CD8-positive, alpha-beta memory T cell (primary cell): ENCODE measurements at regions of chr3 and their contacts with region 1.

Region 1: DNA sequence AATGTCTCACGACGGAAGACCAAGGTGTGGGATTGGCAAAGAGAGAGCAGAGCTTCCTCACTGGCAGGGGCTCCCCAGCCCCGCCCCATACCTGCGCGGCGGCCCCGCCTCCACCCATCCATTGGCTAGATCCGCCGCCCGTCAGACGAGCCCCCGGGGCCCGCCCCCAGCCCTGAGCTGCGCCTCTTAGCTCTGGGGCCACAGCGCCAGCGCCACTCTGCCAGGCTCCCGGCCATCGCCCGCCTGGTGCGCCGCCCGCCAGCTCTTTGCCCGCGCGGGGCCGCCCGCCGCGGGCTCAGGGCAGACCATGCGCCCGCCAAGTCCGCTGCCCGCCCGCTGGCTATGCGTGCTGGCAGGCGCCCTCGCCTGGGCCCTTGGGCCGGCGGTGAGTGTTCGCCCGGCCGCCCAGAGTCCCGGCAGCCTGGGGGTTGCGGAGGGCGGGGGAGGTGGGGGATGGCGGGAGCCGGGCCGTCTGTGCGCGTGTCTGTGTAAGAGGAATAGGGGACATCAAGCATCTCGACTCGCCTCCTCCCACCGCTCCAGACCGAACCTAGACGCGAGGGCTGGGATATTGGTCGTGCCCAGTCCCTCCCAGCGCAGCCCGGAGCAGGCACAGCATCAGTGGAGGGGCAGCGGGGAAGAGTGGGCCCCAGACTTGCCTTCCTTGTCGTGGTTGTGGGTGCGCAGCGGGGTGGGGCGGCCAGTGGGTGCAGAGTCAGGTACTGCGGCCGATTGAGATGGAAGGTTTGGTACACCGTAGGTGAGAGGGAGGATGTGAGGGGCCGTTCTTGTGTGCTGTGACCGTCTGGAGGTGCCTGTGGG is at the start of gene VIPR1:
- DNase-seq: peak; percentile 82 to 95 (median 89)
- H3K4me3 ChIP-seq: peak within 1 kb of the TSS; percentile 95
- H3K4me3 Mint-ChIP-seq: peak within 1 kb of the TSS; percentile 88 to 98 (median 93)
- H3K27ac ChIP-seq: peak within 1 kb of the TSS; percentile 38
- H3K27ac Mint-ChIP-seq: peak within 1 kb of the TSS; percentile 70 to 94 (median 88)
- H3K4me1 ChIP-seq: peaks cover 34% of the 10 kb centered on the region
- H3K4me1 Mint-ChIP-seq: peaks cover 32 to 44% (median 32%) of the 10 kb centered on the region in 3 donors
- H3K27me3 ChIP-seq: peaks cover 22% of the 10 kb centered on the region
- H3K27me3 Mint-ChIP-seq: peaks cover 17 to 21% of the 10 kb centered on the region in 2 donors
- total RNA-seq, gene VIPR1: 5.4 to 5.9 TPM

Region 2: DNA sequence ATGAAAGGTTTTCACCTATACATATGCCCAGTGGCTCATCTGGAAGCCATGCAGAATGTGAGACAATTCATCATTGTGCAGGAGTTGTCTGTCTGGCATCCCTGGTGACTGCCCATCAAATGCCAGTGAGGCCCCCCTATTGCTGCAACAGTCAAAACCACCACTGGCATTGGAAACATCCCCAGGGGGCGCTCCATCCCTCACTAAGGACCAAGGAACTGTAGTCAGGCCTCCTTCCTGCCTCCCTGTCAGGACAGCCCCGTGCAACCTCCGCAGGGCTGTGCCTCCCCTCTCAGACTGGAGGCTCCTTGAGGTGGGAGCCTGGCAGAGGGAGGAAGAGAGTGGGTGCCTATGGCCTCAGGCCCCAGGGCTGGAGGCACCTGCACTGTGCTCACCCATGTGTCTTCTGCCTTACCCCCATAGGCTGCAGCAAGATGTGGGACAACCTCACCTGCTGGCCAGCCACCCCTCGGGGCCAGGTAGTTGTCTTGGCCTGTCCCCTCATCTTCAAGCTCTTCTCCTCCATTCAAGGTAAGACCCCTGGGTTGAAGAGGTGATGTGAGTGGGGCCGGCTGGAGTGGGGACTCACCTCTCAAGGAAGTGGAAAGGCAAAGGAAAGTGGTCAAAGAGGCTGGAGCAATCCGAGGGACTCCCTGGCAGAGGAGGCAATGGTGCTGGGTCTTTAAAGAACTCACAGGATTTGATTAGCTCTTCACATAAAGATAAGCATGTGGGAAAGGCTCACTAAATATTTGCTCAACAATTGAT is 16.3 kb after region 1 on chr3:
- CTCF ChIA-PET with region 1: interaction called, 27 read pairs
- POLR2A ChIA-PET with region 1: no interaction called
- DNase-seq: peak; percentile 31 to 62 (median 47)
- H3K4me3 ChIP-seq: no peak overlapping the region
- H3K4me3 Mint-ChIP-seq: peak overlapping the region in 3 of 7 donors; percentile 11 to 70 (median 51)
- H3K27ac ChIP-seq: no peak overlapping the region
- H3K27ac Mint-ChIP-seq: peak overlapping the region in 7 of 8 donors; percentile 23 to 94 (median 78)
- H3K4me1 ChIP-seq: peaks cover 23% of the 10 kb centered on the region
- H3K4me1 Mint-ChIP-seq: peaks cover 25 to 33% (median 28%) of the 10 kb centered on the region in 3 donors
- H3K27me3 ChIP-seq: no peaks in the 10 kb centered on the region
- H3K27me3 Mint-ChIP-seq: no peaks in the 10 kb centered on the region

Region 3: DNA sequence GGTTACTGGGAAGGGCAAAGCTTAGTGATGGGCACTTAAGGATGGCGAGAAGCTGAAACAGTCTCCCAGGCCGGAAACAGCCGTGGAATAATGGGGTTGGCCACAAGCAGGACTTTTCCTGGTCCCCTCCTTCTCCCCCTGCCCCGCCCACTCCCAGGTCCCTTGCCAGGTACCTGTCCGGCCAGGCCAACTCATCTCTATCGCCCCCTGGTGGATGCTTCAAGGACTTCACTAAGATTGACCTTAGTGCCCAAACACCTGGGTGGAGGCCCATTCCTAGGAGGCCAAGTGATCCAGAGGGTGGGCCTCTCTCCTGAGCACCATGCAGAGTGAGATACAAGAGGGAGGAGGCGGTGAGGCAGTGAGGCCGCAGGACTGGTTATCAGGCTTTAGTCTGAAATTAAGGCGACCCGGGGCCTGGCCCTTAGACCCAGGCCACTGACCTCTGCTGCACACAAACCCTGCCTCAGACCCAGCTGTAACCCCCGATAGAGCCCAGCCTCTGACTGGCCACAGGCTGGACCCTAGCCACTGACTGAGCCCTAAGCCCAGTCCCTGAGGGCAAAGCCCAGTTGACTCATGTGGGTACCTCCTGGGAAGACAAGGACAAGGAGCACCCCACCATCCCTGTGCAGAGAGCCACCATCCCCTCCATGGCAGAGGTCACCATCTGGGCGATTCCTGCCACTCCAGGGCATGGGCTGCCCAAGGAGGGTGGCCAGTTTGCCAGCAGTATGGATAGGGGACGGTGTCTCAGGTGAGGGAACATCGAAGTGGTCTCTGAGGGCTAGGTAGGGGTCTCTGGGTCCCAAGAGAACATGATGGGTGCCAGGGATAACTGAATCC is 37.5 kb after region 1 on chr3:
- CTCF ChIA-PET with region 1: interaction called, 178 read pairs
- POLR2A ChIA-PET with region 1: interaction called, 12 read pairs
- DNase-seq: peak; percentile 36 to 77 (median 56)
- H3K4me3 ChIP-seq: no peak overlapping the region
- H3K4me3 Mint-ChIP-seq: no peak overlapping the region
- H3K27ac ChIP-seq: no peak overlapping the region
- H3K27ac Mint-ChIP-seq: peak overlapping the region in 2 of 8 donors; percentile 12 to 35
- H3K4me1 ChIP-seq: peaks cover 11% of the 10 kb centered on the region
- H3K4me1 Mint-ChIP-seq: peaks cover 9 to 21% (median 16%) of the 10 kb centered on the region in 3 donors
- H3K27me3 ChIP-seq: no peaks in the 10 kb centered on the region
- H3K27me3 Mint-ChIP-seq: no peaks in the 10 kb centered on the region

Region 4: DNA sequence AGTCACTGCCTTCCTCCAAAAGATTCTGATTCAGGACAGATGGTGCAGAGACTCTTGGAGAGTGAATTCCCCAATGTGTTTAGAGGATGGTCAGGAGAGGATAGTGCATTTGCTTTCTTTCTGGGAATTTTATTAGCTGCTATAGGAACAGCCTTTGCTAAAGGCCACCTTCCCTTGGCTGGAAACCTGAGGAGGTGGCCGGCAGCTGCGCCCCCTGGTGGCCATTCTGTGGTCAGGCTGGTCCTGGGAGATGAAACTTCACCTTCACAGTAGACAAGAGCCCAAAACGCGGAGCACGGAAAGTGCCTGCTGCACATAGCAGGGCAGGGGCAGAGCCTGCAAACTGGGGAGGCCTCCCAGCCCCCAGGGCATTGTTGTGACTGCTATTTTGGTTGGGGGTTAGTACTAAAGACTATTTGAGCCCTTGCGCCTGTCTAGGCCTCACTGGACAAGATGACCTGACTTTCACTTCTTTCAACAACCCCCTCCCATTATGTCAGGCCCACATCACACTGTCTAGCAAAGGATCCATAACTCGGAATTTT is 44.8 kb after region 1 on chr3:
- CTCF ChIA-PET with region 1: interaction called, 178 read pairs
- POLR2A ChIA-PET with region 1: interaction called, 4 read pairs
- DNase-seq: peak; percentile 46 to 74 (median 51)
- H3K4me3 ChIP-seq: no peak overlapping the region
- H3K4me3 Mint-ChIP-seq: no peak overlapping the region
- H3K27ac ChIP-seq: no peak overlapping the region
- H3K27ac Mint-ChIP-seq: peak overlapping the region in 2 of 8 donors; percentile 8 to 65
- H3K4me1 ChIP-seq: no peaks in the 10 kb centered on the region
- H3K4me1 Mint-ChIP-seq: peaks cover 4 to 20% (median 8%) of the 10 kb centered on the region in 3 donors
- H3K27me3 ChIP-seq: no peaks in the 10 kb centered on the region
- H3K27me3 Mint-ChIP-seq: peaks cover 0 to 1% of the 10 kb centered on the region in 2 donors

Region 5: DNA sequence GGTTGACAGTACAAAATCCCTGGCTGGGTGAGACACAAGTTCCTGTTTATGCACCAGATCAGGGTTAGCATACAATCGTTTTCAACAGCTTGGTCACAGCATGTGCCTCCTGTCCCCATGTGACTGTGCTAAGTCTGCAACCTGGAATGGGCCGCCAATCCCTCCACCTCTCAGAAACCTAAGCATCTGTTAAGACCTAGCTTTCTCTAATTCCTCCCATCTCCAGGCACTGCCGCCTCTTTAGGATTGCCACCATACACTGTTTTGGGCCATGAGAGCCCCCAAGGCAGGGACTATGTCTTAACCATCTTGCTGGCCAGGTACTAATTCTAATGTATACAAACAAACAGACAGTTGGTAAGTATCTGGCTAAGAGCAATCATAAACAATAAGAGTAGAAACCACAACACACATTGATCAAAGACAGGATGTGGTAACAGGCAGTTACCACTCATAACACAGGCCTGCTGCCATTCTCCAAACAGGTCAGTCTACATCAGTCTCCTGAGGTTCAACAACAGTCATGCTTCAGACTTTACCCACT is 53.5 kb after region 1 on chr3:
- CTCF ChIA-PET with region 1: interaction called, 178 read pairs
- POLR2A ChIA-PET with region 1: interaction called, 4 read pairs
- DNase-seq: peak; percentile 9 to 77 (median 62)
- H3K4me3 ChIP-seq: peak overlapping the region; percentile 8
- H3K4me3 Mint-ChIP-seq: peak overlapping the region; percentile 19 to 82 (median 69)
- H3K27ac ChIP-seq: peak overlapping the region; percentile 21
- H3K27ac Mint-ChIP-seq: peak overlapping the region; percentile 86 to 98 (median 95)
- H3K4me1 ChIP-seq: peaks cover 22% of the 10 kb centered on the region
- H3K4me1 Mint-ChIP-seq: peaks cover 34 to 50% (median 50%) of the 10 kb centered on the region in 3 donors
- H3K27me3 ChIP-seq: no peaks in the 10 kb centered on the region
- H3K27me3 Mint-ChIP-seq: no peaks in the 10 kb centered on the region

Region 6: GRCh38 chr3:42600111-42600988 is 97.7 kb after region 1 on chr3 and contains the start of gene NKTR:
- CTCF ChIA-PET with region 1: interaction called, 8 read pairs
- POLR2A ChIA-PET with region 1: interaction called, 11 read pairs
- DNase-seq: peak; percentile 99 to 100 (median 99)
- H3K4me3 ChIP-seq: peak within 1 kb of the TSS; percentile 92
- H3K4me3 Mint-ChIP-seq: peak within 1 kb of the TSS; percentile 89 to 98 (median 94)
- H3K27ac ChIP-seq: peak within 1 kb of the TSS; percentile 81
- H3K27ac Mint-ChIP-seq: peak within 1 kb of the TSS; percentile 95 to 100 (median 97)
- H3K4me1 ChIP-seq: peaks cover 33% of the 10 kb centered on the region
- H3K4me1 Mint-ChIP-seq: peaks cover 35 to 48% (median 40%) of the 10 kb centered on the region in 3 donors
- H3K27me3 ChIP-seq: no peaks in the 10 kb centered on the region
- H3K27me3 Mint-ChIP-seq: no peaks in the 10 kb centered on the region
- total RNA-seq, gene NKTR: 54.1 to 58.2 TPM